Esophagus squamous epithelium (tissue), 5 donors: ENCODE measurements at regions of chr2 and their contacts with region 1.

Region 1: GRCh38 chr2:213151437-213152064 is at the start of gene IKZF2:
- DNase-seq: peak; percentile 44
- H3K4me3 ChIP-seq: peak within 1 kb of the TSS; percentile 85 to 99 (median 90)
- H3K27ac ChIP-seq: peak within 1 kb of the TSS; percentile 98 to 99 (median 98)
- H3K4me1 ChIP-seq: peaks cover 0 to 55% (median 17%) of the 10 kb centered on the region in 3 donors
- H3K27me3 ChIP-seq: no peaks in the 10 kb centered on the region
- CTCF ChIP-seq: no peak
- POLR2A ChIP-seq: peak in 2 of 4 donors; percentile 68 to 70
- total RNA-seq, gene IKZF2: 44.1 to 96.1 (median 78.6) TPM

Region 2: GRCh38 chr2:212686285-212686895 is 465.2 kb before region 1 on chr2:
- intact Hi-C with region 1: loop called (anchors 5 kb)
- DNase-seq: no peak
- H3K4me3 ChIP-seq: no peak overlapping the region
- H3K27ac ChIP-seq: no peak overlapping the region
- H3K4me1 ChIP-seq: peaks cover 0 to 8% (median 0%) of the 10 kb centered on the region in 3 donors
- H3K27me3 ChIP-seq: no peaks in the 10 kb centered on the region
- CTCF ChIP-seq: peak; percentile 48 to 89 (median 81)
- POLR2A ChIP-seq: no peak

Region 3: DNA sequence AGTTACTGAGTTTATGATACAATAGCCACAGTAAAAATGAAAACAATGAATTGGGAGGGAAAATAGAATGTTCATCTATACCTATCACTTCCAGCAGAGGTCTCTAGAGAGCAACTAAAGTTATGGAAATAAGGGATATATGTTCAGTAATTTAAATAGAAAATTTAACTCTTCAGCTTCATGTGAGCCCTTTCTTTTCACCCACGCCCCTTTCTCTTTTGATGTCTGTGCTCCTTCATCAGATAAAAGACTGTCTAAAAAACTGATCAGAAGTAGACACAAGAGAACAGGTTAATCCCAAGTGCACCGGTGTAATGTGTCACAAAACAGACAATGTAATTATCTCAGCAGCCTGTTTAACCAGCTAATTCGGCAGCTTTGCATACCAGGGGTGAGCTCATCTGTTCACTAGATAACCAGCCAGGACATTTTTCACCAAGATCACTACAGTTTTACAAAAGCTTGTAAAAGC is 374.5 kb before region 1 on chr2:
- intact Hi-C with region 1: loop called (anchors 10 kb)
- DNase-seq: no peak
- H3K4me3 ChIP-seq: no peak overlapping the region
- H3K27ac ChIP-seq: no peak overlapping the region
- H3K4me1 ChIP-seq: peaks cover 0 to 8% (median 0%) of the 10 kb centered on the region in 3 donors
- H3K27me3 ChIP-seq: no peaks in the 10 kb centered on the region
- CTCF ChIP-seq: peak; percentile 41 to 78 (median 56)
- POLR2A ChIP-seq: no peak

Region 4: DNA sequence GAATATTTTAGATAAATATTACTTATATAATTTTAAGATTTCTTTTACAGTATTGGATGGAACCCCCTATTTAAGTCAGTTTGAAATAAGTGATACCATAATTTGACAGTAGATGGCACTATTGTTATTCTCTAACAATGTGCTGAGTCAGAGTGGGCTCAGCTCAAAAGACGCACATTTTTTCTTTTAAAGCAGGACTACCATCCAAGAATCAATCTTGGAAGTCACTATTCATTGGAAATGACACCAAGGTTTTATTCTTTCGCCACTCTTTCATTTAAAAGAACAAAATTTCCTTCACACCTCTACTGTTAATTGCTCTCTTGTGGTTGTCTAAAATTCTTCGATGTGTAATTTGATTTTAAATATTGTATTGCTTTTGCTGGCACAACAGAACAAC is 100.1 kb after region 1 on chr2:
- intact Hi-C with region 1: no loop called
- DNase-seq: no peak
- H3K4me3 ChIP-seq: no peak overlapping the region
- H3K27ac ChIP-seq: no peak overlapping the region
- H3K4me1 ChIP-seq: peaks cover 0 to 48% (median 0%) of the 10 kb centered on the region in 3 donors
- H3K27me3 ChIP-seq: no peaks in the 10 kb centered on the region
- CTCF ChIP-seq: peak; percentile 48 to 74 (median 60)
- POLR2A ChIP-seq: no peak

Region 5: GRCh38 chr2:213261771-213262170 is 110.2 kb after region 1 on chr2:
- intact Hi-C with region 1: no loop called
- DNase-seq: no peak
- H3K4me3 ChIP-seq: no peak overlapping the region
- H3K27ac ChIP-seq: no peak overlapping the region
- H3K4me1 ChIP-seq: no peaks in the 10 kb centered on the region
- H3K27me3 ChIP-seq: no peaks in the 10 kb centered on the region
- CTCF ChIP-seq: no peak
- POLR2A ChIP-seq: no peak